AG04449 (cell line): ENCODE measurements at regions of chr7 and their contacts with region 1.

Region 1: GRCh38 chr7:80060218-80060806 is 74.3 kb upstream of the GNAI1 start:
- DNase-seq: no peak
- H3K4me3 ChIP-seq: no peak overlapping the region
- CTCF ChIP-seq: peak; percentile 14

Region 2: DNA sequence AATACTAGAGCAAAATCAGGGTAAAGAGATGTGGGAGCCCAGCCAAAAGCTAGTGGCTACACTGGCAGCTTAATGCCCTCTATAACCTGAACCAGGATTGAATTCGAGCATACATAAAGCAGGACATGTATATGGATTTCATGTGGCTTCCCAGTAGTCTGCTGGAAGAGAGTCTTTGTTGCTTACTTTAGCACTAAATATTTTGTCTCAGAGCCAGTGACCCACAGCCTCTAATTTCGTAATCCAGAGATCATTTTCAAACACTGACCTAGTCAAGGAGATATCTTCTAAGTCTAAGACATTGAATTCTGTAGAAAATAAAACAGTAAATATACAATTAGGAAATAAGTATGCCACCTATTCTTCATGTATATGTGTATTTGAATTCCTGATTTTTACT is 10.1 kb after region 1 on chr7:
- CTCF ChIA-PET with region 1: interaction called, 10 read pairs
- POLR2A ChIA-PET with region 1: no interaction called
- DNase-seq: no peak
- H3K4me3 ChIP-seq: no peak overlapping the region
- CTCF ChIP-seq: no peak

Region 3: DNA sequence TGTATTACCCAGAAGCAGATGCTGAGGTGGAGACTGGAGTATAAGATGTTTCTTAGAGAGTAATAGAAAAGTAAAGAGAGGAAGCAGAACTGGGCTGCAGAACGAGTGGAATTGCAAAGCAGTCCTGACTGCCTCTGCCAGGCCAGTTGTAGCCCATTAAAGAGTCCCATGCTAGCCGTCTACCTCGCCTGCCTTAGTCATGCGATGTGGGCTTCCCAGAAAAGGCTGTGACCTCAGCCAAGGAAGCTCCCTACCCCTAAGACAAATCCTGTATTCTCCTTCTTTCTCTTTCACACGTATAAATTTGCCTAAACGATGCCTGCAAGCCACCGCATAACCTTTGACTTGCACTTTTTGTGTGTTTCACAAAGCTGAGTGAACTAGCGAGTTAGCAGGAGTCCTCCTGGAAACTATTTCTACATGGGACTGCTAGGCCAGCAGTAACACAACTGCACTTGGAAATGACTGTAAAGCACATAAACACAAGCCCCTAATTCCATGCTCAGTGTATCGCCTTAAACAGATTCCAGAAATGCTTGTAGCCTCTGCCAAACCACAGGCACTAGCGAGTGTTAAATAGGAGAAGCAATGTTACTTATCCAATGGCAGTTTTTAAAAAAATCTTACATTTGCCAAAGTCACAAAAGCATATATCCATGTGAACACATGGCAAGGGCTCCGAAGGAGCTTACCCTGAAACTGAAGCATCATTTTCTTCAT is 26.9 kb after region 1 on chr7:
- CTCF ChIA-PET with region 1: interaction called, 11 read pairs
- POLR2A ChIA-PET with region 1: no interaction called
- DNase-seq: peak; percentile 63
- H3K4me3 ChIP-seq: no peak overlapping the region
- CTCF ChIP-seq: no peak

Region 4: DNA sequence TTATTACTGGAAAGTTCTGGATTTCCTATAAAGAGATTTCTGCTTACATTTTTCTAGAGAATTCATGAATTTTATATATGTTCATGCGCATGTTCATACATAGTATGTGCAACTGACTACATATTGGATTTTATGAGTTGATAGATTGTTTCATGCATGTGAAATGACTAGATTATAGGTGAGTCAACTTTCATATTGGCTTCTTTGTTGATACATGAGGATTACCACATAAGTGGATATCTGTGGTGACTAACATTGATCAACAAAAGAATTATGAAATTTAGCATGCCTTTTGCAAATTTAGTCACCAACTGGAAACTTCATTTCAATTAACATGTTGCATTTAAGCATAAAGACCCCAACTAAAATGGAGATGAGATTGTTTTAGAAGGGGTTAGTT is 352.5 kb after region 1 on chr7:
- CTCF ChIA-PET with region 1: interaction called, 10 read pairs
- POLR2A ChIA-PET with region 1: no interaction called
- DNase-seq: peak; percentile 34
- H3K4me3 ChIP-seq: no peak overlapping the region
- CTCF ChIP-seq: no peak

Region 5: DNA sequence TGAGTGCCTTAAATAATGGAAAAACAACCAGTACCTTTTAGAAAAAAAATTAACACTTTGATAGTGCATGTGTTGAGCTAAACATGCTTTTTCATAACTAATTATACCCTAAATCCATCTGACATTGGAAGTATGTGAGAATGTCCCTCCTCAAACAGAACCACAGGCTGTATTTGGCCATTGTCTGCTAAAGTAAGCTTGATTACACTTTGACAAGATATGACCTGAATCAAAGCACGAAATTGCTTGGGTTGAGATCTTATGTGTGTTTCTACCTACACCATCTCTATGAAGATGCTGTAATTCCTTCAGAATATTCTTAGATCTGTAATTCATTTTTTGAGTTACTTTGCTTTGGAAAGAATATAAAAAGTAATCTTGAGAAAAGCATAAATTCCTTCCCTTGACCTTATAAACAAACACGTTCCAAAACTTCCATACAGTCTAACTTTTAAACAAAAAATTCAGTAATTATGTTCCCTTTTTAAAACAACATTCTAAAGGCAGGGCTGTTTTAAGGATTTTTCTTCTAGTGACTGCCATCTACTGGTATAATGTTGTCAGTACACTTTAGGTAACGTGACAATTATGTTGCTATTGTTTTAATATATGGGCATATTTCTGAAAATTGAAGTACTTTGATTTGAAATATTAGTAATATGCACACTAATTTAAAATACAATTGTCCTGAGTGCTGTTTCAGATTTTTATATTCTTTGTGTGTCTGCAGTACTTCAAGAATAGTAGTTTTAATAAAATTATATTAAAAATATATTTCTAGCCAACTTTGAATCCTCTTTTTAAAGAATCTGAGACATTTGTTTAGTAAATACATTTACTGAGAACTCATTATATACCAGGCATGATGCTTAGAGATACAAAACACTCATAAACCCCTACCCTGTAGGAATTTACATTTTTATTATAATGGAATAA is 599.1 kb after region 1 on chr7:
- CTCF ChIA-PET with region 1: interaction called, 11 read pairs
- POLR2A ChIA-PET with region 1: no interaction called
- DNase-seq: no peak
- H3K4me3 ChIP-seq: no peak overlapping the region
- CTCF ChIP-seq: peak; percentile 26